Activated CD4-positive, alpha-beta memory T cell treated with anti-CD3 and anti-CD28 coated beads, Interleukin-2, amount 10 ng/mL, durations not matched to agents 7 days and 5 days (primary cell): ENCODE measurements at regions of chr15 and their contacts with region 1.

Region 1: DNA sequence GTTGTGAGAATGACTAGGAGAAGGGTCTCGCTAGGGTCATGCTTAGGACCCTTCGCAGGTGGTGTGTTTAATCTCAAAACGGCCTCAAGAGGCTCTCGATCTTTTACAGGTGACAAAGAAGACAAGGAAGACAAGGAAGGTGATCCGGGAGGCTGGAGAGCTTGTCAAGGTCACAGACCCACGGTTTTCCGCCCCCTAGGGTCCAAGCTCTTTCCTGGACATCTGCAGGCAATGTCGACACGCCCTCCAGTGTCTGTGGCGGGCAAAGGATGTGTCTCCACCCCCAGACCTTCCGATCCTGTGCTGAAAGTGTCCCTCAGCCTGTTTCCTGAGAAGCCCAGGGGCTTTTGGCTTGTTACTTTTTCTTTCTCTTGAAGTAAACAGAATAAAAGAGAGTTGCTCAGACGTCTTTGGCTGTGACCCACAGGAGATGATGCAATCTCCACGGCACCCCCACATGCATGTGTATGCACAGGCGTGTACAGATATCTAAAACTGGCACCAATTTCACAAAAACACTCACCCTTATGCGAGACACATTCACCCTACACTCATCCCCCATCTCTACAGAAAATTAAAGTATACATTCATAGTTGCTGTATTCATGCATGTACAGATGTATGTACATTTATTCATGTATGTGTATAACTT is 108.8 kb downstream of the KLF13 start:
- DNase-seq: peak; percentile 88
- H3K4me3 Mint-ChIP-seq: peak overlapping the region; percentile 75
- H3K27ac Mint-ChIP-seq: peak overlapping the region; percentile 100
- H3K4me1 Mint-ChIP-seq: peaks cover 77% of the 10 kb centered on the region
- H3K27me3 Mint-ChIP-seq: no peaks in the 10 kb centered on the region

Region 2: GRCh38 chr15:31111091-31111647 is 324.2 kb before region 1 on chr15:
- CTCF ChIA-PET with region 1: no interaction called
- POLR2A ChIA-PET with region 1: no interaction called
- DNase-seq: no peak
- H3K4me3 Mint-ChIP-seq: no peak overlapping the region
- H3K27ac Mint-ChIP-seq: no peak overlapping the region
- H3K4me1 Mint-ChIP-seq: no peaks in the 10 kb centered on the region
- H3K27me3 Mint-ChIP-seq: peaks cover 18% of the 10 kb centered on the region

Region 3: GRCh38 chr15:31215490-31216214 is 219.7 kb before region 1 on chr15:
- CTCF ChIA-PET with region 1: interaction called, 20 read pairs
- POLR2A ChIA-PET with region 1: interaction called, 26 read pairs
- DNase-seq: peak; percentile 85
- H3K4me3 Mint-ChIP-seq: peak overlapping the region; percentile 78
- H3K27ac Mint-ChIP-seq: peak overlapping the region; percentile 78
- H3K4me1 Mint-ChIP-seq: peaks cover 47% of the 10 kb centered on the region
- H3K27me3 Mint-ChIP-seq: no peaks in the 10 kb centered on the region

Region 4: DNA sequence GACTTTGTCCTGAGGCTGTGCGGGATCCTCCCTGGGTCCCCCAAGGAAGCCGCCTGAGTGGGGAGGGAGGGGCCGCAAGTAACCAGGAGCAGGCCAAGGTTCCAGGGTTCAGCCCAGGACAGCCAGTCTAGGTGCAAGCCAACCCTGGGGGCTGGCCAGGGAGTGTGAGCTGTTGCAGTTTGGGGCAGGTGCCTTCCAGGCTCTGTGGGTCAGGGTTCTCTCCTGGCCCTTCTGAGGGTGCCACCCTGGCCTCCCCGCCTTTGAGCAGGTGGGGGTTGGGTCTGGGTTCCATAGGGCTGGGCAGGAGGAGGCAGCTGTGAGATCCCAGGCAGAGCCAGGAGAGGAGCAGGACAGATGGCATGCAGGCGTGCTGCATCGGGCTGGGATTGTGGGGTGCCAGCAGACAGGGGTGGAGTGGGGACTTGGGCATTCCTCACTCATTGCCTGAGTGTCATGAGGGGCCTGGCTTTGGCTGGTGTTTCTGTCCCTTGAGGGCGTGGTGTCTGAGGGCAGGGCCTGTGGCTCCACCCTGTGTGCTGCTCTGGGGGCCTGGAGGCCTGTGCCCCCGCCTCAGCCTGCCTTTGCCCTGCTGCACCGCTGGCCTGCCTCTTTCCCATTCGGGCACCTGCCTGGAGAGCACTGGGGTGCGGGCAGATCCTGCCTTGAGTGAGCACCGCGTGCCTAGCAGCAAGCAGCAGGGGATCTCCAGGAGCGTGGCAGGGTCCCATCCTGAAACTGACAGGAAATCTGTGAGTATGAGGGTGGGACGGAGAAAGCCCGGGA is 90.4 kb before region 1 on chr15:
- CTCF ChIA-PET with region 1: interaction called, 3 read pairs
- POLR2A ChIA-PET with region 1: interaction called, 55 read pairs
- DNase-seq: no peak
- H3K4me3 Mint-ChIP-seq: peak overlapping the region; percentile 89
- H3K27ac Mint-ChIP-seq: peak overlapping the region; percentile 97
- H3K4me1 Mint-ChIP-seq: peaks cover 100% of the 10 kb centered on the region
- H3K27me3 Mint-ChIP-seq: no peaks in the 10 kb centered on the region

Region 5: DNA sequence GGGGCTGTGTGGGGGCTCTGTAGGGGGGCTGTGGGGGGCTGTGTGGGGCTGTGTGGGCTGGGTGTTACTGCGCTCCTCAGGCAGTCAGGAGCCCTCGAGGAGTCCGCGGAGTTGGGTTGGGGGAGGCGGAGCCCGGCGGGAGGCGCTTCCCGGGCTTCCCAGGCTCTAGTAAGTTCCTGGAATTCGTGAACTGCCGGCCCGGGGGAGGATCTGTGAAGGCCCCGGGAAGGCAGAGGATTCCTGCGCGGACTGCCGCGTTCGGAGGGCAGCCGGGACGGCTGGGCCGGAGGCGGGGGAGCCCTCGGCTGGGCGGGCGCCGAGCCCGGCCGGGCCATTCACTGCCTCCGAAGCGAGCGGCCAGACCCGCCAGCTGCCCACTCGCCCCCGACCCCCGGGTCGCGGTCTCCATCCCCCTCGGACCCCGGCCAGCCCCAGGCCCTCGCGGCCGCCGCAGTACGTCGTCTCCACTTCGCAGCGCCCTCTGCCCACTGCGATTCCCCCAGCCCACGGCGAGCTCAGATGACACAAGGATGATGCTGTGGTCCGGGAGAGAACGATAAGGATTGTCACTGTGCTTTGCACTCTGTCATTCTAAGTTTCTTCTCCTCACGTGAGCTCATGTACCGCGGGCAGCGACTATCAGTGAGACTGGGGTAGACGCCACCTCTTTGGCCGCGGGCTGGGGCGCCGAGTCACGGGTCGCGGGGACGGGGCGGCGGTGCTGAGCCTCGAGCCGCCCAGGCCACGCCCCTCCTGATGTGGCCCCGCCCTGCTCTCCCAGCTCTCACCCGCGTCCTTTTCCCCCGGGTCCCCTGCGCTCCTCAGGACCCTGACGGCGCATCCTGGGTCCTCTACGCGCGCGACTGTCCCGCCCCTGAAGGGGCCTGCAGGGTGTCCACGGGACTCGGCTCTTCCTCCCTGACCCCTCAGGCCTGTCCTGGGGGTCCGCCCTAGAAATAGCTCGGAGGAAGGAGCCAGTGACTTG is 43.4 kb before region 1 on chr15:
- CTCF ChIA-PET with region 1: interaction called, 19 read pairs
- POLR2A ChIA-PET with region 1: interaction called, 56 read pairs
- DNase-seq: peak; percentile 87
- H3K4me3 Mint-ChIP-seq: peak overlapping the region; percentile 88
- H3K27ac Mint-ChIP-seq: peak overlapping the region; percentile 80
- H3K4me1 Mint-ChIP-seq: peaks cover 49% of the 10 kb centered on the region
- H3K27me3 Mint-ChIP-seq: no peaks in the 10 kb centered on the region

Region 6: GRCh38 chr15:31412824-31413223 is 22.6 kb before region 1 on chr15:
- CTCF ChIA-PET with region 1: interaction called, 14 read pairs
- POLR2A ChIA-PET with region 1: interaction called, 4 read pairs
- DNase-seq: no peak
- H3K4me3 Mint-ChIP-seq: no peak overlapping the region
- H3K27ac Mint-ChIP-seq: no peak overlapping the region
- H3K4me1 Mint-ChIP-seq: peaks cover 7% of the 10 kb centered on the region
- H3K27me3 Mint-ChIP-seq: peaks cover 13% of the 10 kb centered on the region

Region 7: GRCh38 chr15:31488426-31489204 is 53.2 kb after region 1 on chr15:
- CTCF ChIA-PET with region 1: interaction called, 117 read pairs
- POLR2A ChIA-PET with region 1: interaction called, 48 read pairs
- DNase-seq: peak; percentile 49
- H3K4me3 Mint-ChIP-seq: no peak overlapping the region
- H3K27ac Mint-ChIP-seq: peak overlapping the region; percentile 21
- H3K4me1 Mint-ChIP-seq: peaks cover 63% of the 10 kb centered on the region
- H3K27me3 Mint-ChIP-seq: peaks cover 7% of the 10 kb centered on the region

Region 8: GRCh38 chr15:31554261-31554660 is 118.9 kb after region 1 on chr15:
- CTCF ChIA-PET with region 1: no interaction called
- POLR2A ChIA-PET with region 1: no interaction called
- DNase-seq: no peak
- H3K4me3 Mint-ChIP-seq: no peak overlapping the region
- H3K27ac Mint-ChIP-seq: no peak overlapping the region
- H3K4me1 Mint-ChIP-seq: no peaks in the 10 kb centered on the region
- H3K27me3 Mint-ChIP-seq: no peaks in the 10 kb centered on the region

Region 9: DNA sequence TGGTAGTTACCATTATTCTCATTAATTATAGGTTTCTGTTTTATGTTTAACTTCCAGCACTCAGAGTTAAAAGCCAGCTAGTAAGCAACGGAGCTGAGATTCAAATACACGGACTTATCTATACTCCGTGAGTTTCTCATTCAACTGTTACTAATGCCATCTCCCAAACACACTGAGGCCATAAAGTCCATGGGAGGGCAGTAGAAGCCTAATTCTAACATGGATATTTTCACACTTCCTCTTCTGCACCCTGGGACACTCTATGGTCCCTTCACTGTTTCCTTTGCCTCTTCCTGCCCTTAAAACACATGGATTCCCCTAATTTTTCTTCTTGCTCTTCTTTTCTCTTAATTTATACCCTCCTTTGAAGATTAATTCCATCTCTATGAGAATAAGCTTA is 136.3 kb after region 1 on chr15:
- CTCF ChIA-PET with region 1: no interaction called
- POLR2A ChIA-PET with region 1: no interaction called
- DNase-seq: no peak
- H3K4me3 Mint-ChIP-seq: no peak overlapping the region
- H3K27ac Mint-ChIP-seq: no peak overlapping the region
- H3K4me1 Mint-ChIP-seq: no peaks in the 10 kb centered on the region
- H3K27me3 Mint-ChIP-seq: peaks cover 3% of the 10 kb centered on the region